Aorta (tissue), 5 donors: ENCODE measurements at regions of chr12 and their contacts with region 1.

Region 1: DNA sequence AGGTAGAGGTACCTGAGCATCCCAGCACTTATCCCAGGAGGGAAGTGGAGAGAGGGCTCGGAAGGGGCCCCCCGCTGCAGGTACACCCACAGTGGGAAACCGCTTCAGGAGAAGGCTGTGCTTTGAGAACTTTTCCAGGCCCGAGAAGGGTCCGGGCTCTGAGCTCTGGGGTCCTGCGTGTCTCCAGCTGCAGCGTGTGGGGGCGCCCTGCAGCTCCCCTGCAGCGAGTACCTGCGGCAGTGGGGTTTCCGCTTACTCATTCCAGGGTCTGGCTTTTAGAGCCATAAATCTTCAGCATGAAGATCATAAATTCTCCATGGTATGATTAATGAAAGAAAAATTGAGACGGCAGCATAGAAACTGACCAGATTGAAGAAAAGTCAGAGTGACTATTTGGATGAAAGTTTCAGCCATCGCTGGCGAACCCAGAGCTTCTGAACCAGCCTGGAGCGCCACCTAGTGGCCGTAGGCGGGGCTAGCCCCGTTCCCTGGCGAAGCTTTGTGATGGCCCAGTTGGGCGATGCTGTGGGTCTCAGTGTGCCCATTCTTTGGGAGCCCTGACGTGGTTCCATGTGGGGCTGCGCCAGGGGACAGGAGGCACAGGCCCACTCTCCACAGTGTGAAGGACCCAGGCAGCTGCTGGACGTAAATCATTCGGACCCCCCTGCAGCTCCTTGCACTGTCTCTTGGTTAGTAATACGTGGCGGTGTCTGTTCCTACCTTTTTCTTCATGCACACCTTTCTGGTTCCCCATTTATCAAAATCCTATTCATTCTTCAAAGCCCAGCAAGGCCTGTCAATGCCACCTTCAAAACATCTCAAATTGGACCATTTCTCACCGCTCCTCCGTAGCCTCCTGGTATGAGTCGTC is 198.2 kb downstream of the TSPAN9 start:
- DNase-seq: peak; percentile 83 to 93
- ATAC-seq: peak; percentile 80
- H3K4me3 ChIP-seq: no peak overlapping the region
- H3K27ac ChIP-seq: no peak overlapping the region
- H3K4me1 ChIP-seq: no peaks in the 10 kb centered on the region
- H3K27me3 ChIP-seq: no peaks in the 10 kb centered on the region

Region 2: GRCh38 chr12:3135522-3136461 is 139.6 kb before region 1 on chr12:
- intact Hi-C with region 1: loop called (anchors 1 kb)
- DNase-seq: peak; percentile 43 to 44
- ATAC-seq: peak; percentile 79
- H3K4me3 ChIP-seq: no peak overlapping the region
- H3K27ac ChIP-seq: no peak overlapping the region
- H3K4me1 ChIP-seq: no peaks in the 10 kb centered on the region
- H3K27me3 ChIP-seq: no peaks in the 10 kb centered on the region